ENCODE measurements at regions of chr1 and their contacts with region 1.

Region 1: DNA sequence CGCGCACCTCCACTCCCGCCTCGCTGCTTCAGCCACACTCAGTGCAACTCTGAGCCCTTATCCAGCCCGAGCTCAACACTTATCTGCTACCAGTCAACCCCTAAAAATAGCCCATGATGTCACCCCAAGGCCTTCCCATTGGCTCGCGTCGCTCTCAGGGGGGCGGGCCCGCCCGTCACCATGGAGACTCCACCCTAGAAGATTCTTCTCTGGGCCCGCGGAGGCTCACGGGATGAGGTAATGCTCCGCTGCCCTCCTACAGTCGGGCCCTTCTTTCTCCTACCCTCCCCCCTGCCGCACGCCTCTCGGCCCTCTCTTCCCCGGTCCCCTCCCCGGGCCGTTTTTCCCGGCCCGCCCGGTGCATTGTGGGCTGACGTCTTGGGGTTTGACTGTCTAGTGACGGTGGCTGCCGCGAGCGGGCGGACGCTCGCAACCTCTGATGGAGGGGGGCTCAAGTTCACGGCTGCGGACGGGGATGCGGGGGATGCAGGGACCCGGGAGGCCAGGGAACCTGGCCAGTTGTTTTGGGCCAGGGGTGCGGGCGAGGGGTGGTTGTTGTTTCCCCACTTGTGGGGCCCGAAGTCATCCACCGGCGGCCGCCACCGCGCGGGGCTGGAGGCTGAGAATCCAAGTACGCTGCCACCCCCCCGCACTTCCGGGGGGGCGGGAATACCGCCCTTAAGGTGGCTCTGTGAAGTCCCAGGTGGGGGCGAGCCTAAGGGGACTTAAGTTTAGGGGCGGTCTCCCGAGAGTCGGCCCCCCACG is at the start of gene JUN:
- DNase-seq: peak; percentile 94 to 100 (median 98)
- ATAC-seq: peak; percentile 82
- H3K4me3 ChIP-seq: peak within 1 kb of the TSS; percentile 97
- H3K4me3 Mint-ChIP-seq: peak within 1 kb of the TSS; percentile 91 to 100 (median 95)
- H3K27ac ChIP-seq: peak within 1 kb of the TSS; percentile 95
- H3K27ac Mint-ChIP-seq: peak within 1 kb of the TSS; percentile 98 to 100 (median 100)
- H3K4me1 ChIP-seq: peaks cover 13 to 16% of the 10 kb centered on the region in 2 donors
- H3K4me1 Mint-ChIP-seq: peaks cover 7 to 49% (median 33%) of the 10 kb centered on the region in 7 donors
- H3K27me3 ChIP-seq: peaks cover 0 to 4% of the 10 kb centered on the region in 2 donors
- H3K27me3 Mint-ChIP-seq: peaks cover 0 to 5% (median 3%) of the 10 kb centered on the region in 5 donors
- total RNA-seq, gene JUN: 17.9 to 1,362 (median 41.2) TPM

Region 2: GRCh38 chr1:58546520-58547308 is 237.5 kb before region 1 on chr1 and contains the start of gene OMA1:
- CTCF ChIA-PET with region 1: no interaction called
- POLR2A ChIA-PET with region 1: interaction called, 4 read pairs
- intact Hi-C with region 1: loop called in 1 of 2 experiments (anchors 10 kb)
- DNase-seq: peak; percentile 96 to 98 (median 98)
- ATAC-seq: peak; percentile 97
- H3K4me3 ChIP-seq: peak within 1 kb of the TSS; percentile 65
- H3K4me3 Mint-ChIP-seq: peak within 1 kb of the TSS; percentile 92 to 98 (median 96)
- H3K27ac ChIP-seq: peak within 1 kb of the TSS; percentile 95
- H3K27ac Mint-ChIP-seq: peak within 1 kb of the TSS; percentile 95 to 99 (median 99)
- H3K4me1 ChIP-seq: peaks cover 7% of the 10 kb centered on the region in 2 donors
- H3K4me1 Mint-ChIP-seq: peaks cover 11 to 44% (median 33%) of the 10 kb centered on the region in 7 donors
- H3K27me3 ChIP-seq: no peaks in the 10 kb centered on the region
- H3K27me3 Mint-ChIP-seq: peaks cover 0 to 28% (median 0%) of the 10 kb centered on the region in 5 donors
- total RNA-seq, gene OMA1: 22.7 to 72.5 (median 46.5) TPM

Region 3: GRCh38 chr1:58679463-58679862 is 104.7 kb before region 1 on chr1:
- CTCF ChIA-PET with region 1: no interaction called
- POLR2A ChIA-PET with region 1: no interaction called
- intact Hi-C with region 1: no loop called
- DNase-seq: no peak
- ATAC-seq: no peak
- H3K4me3 ChIP-seq: no peak overlapping the region
- H3K4me3 Mint-ChIP-seq: no peak overlapping the region
- H3K27ac ChIP-seq: no peak overlapping the region
- H3K27ac Mint-ChIP-seq: peak overlapping the region in 4 of 9 donors; percentile 16 to 62 (median 38)
- H3K4me1 ChIP-seq: no peaks in the 10 kb centered on the region
- H3K4me1 Mint-ChIP-seq: peaks cover 9 to 35% (median 28%) of the 10 kb centered on the region in 7 donors
- H3K27me3 ChIP-seq: no peaks in the 10 kb centered on the region
- H3K27me3 Mint-ChIP-seq: no peaks in the 10 kb centered on the region

Region 4: GRCh38 chr1:58768971-58769808 is 15.0 kb before region 1 on chr1:
- CTCF ChIA-PET with region 1: interaction called, 10 read pairs
- POLR2A ChIA-PET with region 1: interaction called, 10 read pairs
- intact Hi-C with region 1: loop called in 1 of 2 experiments (anchors 1 kb)
- DNase-seq: peak in 3 of 9 donors; percentile 10 to 44 (median 10)
- ATAC-seq: no peak
- H3K4me3 ChIP-seq: no peak overlapping the region
- H3K4me3 Mint-ChIP-seq: no peak overlapping the region
- H3K27ac ChIP-seq: no peak overlapping the region
- H3K27ac Mint-ChIP-seq: peak overlapping the region in 1 of 9 donors; percentile 23
- H3K4me1 ChIP-seq: peaks cover 0 to 13% of the 10 kb centered on the region in 2 donors
- H3K4me1 Mint-ChIP-seq: peaks cover 10 to 15% (median 13%) of the 10 kb centered on the region in 7 donors
- H3K27me3 ChIP-seq: no peaks in the 10 kb centered on the region
- H3K27me3 Mint-ChIP-seq: peaks cover 0 to 11% (median 0%) of the 10 kb centered on the region in 5 donors

Region 5: GRCh38 chr1:58857680-58858673 is 73.8 kb after region 1 on chr1:
- CTCF ChIA-PET with region 1: interaction called, 5 read pairs
- POLR2A ChIA-PET with region 1: interaction called, 18 read pairs
- intact Hi-C with region 1: loop called (anchors 1 to 2 kb)
- DNase-seq: peak in 7 of 9 donors; percentile 28 to 61 (median 52)
- ATAC-seq: peak; percentile 76
- H3K4me3 ChIP-seq: no peak overlapping the region
- H3K4me3 Mint-ChIP-seq: peak overlapping the region in 9 of 10 donors; percentile 32 to 83 (median 51)
- H3K27ac ChIP-seq: peak overlapping the region; percentile 65
- H3K27ac Mint-ChIP-seq: peak overlapping the region; percentile 83 to 97 (median 92)
- H3K4me1 ChIP-seq: peaks cover 16 to 34% of the 10 kb centered on the region in 2 donors
- H3K4me1 Mint-ChIP-seq: peaks cover 34 to 64% (median 59%) of the 10 kb centered on the region in 7 donors
- H3K27me3 ChIP-seq: no peaks in the 10 kb centered on the region
- H3K27me3 Mint-ChIP-seq: no peaks in the 10 kb centered on the region

Region 6: DNA sequence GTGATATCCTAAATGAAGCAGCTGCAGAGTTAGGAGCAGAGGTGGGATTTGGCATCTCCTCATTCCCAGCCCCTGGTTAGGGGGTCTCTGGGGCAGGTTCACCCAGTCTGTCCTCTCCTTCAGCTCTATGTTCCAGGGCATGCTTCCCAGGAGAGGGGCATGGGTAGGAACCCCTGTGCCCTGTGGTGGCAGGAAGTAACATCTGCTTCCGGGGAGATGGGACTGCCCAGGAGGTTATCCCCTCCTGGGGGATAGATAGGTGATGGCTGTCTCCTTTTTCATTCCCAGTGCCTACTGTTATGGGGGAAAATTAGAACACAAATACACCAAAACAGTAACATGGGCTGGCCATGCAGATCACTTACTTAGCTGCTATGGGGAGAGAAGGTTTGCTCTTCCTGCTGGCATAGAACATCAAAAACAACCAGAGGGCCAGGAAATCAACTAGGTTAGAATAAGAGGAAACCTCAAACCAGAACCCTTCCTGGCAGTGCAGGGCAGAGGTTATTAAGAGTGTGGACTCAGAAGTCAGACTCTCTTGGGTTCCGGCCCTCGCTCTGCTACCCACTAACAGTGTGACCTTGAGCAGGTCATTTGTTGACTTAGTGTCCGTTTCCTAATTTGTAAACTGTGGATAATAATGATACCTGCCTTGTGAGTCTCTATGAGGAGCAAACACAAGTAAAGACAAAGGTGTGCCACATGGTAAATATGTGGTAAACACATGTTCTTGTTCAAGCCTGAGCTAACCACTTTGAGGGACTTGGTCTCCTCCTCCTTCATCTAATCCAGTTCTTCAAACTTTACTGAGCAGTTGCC is 157.5 kb after region 1 on chr1:
- CTCF ChIA-PET with region 1: no interaction called
- POLR2A ChIA-PET with region 1: interaction called, 11 read pairs
- intact Hi-C with region 1: loop called (anchors 1 kb)
- DNase-seq: peak in 6 of 9 donors; percentile 33 to 65 (median 57)
- ATAC-seq: peak; percentile 83
- H3K4me3 ChIP-seq: peak overlapping the region; percentile 40
- H3K4me3 Mint-ChIP-seq: peak overlapping the region; percentile 60 to 88 (median 80)
- H3K27ac ChIP-seq: peak overlapping the region; percentile 39
- H3K27ac Mint-ChIP-seq: peak overlapping the region; percentile 37 to 89 (median 77)
- H3K4me1 ChIP-seq: peaks cover 48 to 61% of the 10 kb centered on the region in 2 donors
- H3K4me1 Mint-ChIP-seq: peaks cover 60 to 87% (median 74%) of the 10 kb centered on the region in 7 donors
- H3K27me3 ChIP-seq: no peaks in the 10 kb centered on the region
- H3K27me3 Mint-ChIP-seq: no peaks in the 10 kb centered on the region

Region 7: GRCh38 chr1:59076612-59077011 is 292.4 kb after region 1 on chr1:
- CTCF ChIA-PET with region 1: interaction called, 5 read pairs
- POLR2A ChIA-PET with region 1: interaction called, 8 read pairs
- intact Hi-C with region 1: loop called (anchors 1 to 10 kb)
- DNase-seq: peak in 4 of 9 donors; percentile 1 to 12 (median 9)
- ATAC-seq: no peak
- H3K4me3 ChIP-seq: no peak overlapping the region
- H3K4me3 Mint-ChIP-seq: no peak overlapping the region
- H3K27ac ChIP-seq: no peak overlapping the region
- H3K27ac Mint-ChIP-seq: peak overlapping the region in 2 of 9 donors; percentile 8 to 34
- H3K4me1 ChIP-seq: peaks cover 12 to 13% of the 10 kb centered on the region in 2 donors
- H3K4me1 Mint-ChIP-seq: peaks cover 11 to 31% (median 12%) of the 10 kb centered on the region in 7 donors
- H3K27me3 ChIP-seq: no peaks in the 10 kb centered on the region
- H3K27me3 Mint-ChIP-seq: peaks cover 0 to 5% (median 3%) of the 10 kb centered on the region in 5 donors

Region 8: DNA sequence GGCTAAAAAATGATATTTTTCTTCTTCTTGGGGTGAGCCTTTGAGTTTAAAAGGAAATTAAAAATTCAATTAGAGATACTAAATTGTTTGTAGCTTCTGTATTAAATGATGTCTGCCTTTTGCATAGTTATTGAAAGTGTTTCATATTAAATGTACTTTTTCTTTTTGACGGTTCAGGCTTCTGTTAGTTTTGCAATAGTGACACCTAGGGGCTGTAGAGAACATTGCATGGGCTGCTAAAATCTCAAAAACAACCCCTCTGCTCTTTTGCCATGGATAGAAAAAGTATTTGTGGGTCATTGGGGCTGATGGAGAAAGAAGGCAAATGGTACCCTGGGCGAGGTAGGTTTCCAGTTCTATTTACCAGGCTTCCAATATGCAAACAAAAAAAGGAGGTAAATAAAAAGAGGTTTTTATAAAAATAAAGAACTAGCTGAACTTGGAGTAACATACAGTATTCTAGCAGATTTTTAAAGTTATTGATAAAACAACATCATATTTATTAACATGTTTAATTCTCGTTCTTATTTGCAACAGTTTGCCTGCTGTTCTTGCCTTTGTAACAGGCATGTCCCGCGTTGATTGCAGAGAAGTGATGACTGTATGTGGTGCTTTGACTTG is 915.2 kb after region 1 on chr1:
- CTCF ChIA-PET with region 1: interaction called, 27 read pairs
- POLR2A ChIA-PET with region 1: interaction called, 3 read pairs
- intact Hi-C with region 1: loop called (anchors 1 kb)
- DNase-seq: peak in 7 of 9 donors; percentile 21 to 63 (median 51)
- ATAC-seq: peak; percentile 75
- H3K4me3 ChIP-seq: no peak overlapping the region
- H3K4me3 Mint-ChIP-seq: peak overlapping the region in 1 of 10 donors; percentile 19
- H3K27ac ChIP-seq: no peak overlapping the region
- H3K27ac Mint-ChIP-seq: peak overlapping the region in 2 of 9 donors; percentile 1 to 31
- H3K4me1 ChIP-seq: peaks cover 5 to 6% of the 10 kb centered on the region in 2 donors
- H3K4me1 Mint-ChIP-seq: peaks cover 6 to 30% (median 22%) of the 10 kb centered on the region in 7 donors
- H3K27me3 ChIP-seq: no peaks in the 10 kb centered on the region
- H3K27me3 Mint-ChIP-seq: no peaks in the 10 kb centered on the region